ENCODE measurements at regions of chr13 and their contacts with region 1.

Region 1: GRCh38 chr13:23980160-23980551 is 82.9 kb upstream of the C1QTNF9B start:
- DNase-seq: peak; percentile 84 to 96 (median 90)
- ATAC-seq: peak; percentile 92
- H3K4me3 ChIP-seq: peak overlapping the region; percentile 56 to 79
- H3K4me3 Mint-ChIP-seq: peak overlapping the region; percentile 86
- H3K27ac ChIP-seq: peak overlapping the region in 1 of 2 experiments; percentile 51
- H3K27ac Mint-ChIP-seq: peak overlapping the region; percentile 34
- H3K4me1 ChIP-seq: peaks cover 10% of the 10 kb centered on the region
- H3K4me1 Mint-ChIP-seq: peaks cover 8% of the 10 kb centered on the region
- H3K27me3 ChIP-seq: peaks cover 8 to 10% of the 10 kb centered on the region in 2 experiments
- H3K27me3 Mint-ChIP-seq: peaks cover 17% of the 10 kb centered on the region
- CTCF ChIP-seq: no peak

Region 2: DNA sequence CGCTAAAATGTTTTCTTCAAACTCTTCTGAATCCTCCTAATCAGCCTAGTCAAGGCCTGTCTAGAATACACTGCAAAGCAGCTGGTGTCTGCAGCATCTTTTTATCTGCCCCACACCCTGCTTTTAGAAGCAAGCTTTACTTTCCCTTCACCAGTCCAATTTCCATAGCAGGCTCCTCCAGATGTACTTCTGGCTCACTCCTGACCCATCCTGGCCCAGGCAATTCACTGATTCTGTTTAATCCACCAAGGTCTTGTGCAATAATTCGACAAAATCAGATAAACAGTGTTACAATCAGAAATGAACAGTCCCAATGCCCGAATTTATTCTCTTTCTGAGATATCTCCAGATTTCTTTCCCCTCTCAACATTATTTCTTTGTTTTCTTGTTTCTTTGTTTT is 1214.6 kb before region 1 on chr13:
- CTCF ChIA-PET with region 1: no interaction called
- POLR2A ChIA-PET with region 1: no interaction called
- intact Hi-C with region 1: no loop called
- DNase-seq: no peak
- ATAC-seq: no peak
- H3K4me3 ChIP-seq: no peak overlapping the region
- H3K4me3 Mint-ChIP-seq: no peak overlapping the region
- H3K27ac ChIP-seq: no peak overlapping the region
- H3K27ac Mint-ChIP-seq: no peak overlapping the region
- H3K4me1 ChIP-seq: no peaks in the 10 kb centered on the region
- H3K4me1 Mint-ChIP-seq: no peaks in the 10 kb centered on the region
- H3K27me3 ChIP-seq: no peaks in the 10 kb centered on the region
- H3K27me3 Mint-ChIP-seq: no peaks in the 10 kb centered on the region
- CTCF ChIP-seq: no peak

Region 3: DNA sequence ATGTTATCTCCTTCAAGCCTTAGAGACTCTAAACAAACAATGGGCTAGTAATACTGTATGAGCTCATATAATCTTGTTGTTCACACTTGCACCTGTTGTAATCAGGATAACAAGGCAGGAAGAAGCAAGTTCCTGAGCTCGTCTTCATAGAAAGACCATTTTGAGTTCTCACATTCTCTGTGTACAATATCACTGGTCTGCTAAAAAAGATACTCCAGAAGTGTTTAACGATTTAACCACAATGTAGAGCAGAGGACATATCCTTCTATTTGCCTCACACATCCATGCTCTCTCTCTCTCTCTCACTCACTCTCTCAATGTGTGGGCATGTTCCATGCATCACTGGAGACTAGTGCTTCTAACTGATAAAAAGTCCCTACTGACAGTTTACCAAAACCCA is 213.9 kb before region 1 on chr13:
- CTCF ChIA-PET with region 1: no interaction called
- POLR2A ChIA-PET with region 1: no interaction called
- intact Hi-C with region 1: no loop called
- DNase-seq: no peak
- ATAC-seq: no peak
- H3K4me3 ChIP-seq: no peak overlapping the region
- H3K4me3 Mint-ChIP-seq: no peak overlapping the region
- H3K27ac ChIP-seq: no peak overlapping the region
- H3K27ac Mint-ChIP-seq: no peak overlapping the region
- H3K4me1 ChIP-seq: no peaks in the 10 kb centered on the region
- H3K4me1 Mint-ChIP-seq: no peaks in the 10 kb centered on the region
- H3K27me3 ChIP-seq: no peaks in the 10 kb centered on the region
- H3K27me3 Mint-ChIP-seq: no peaks in the 10 kb centered on the region
- CTCF ChIP-seq: no peak

Region 4: GRCh38 chr13:23966691-23967615 is 13.2 kb before region 1 on chr13:
- CTCF ChIA-PET with region 1: no interaction called
- POLR2A ChIA-PET with region 1: no interaction called
- intact Hi-C with region 1: loop called in 1 of 2 experiments (anchors 1 kb)
- DNase-seq: peak in 3 of 9 experiments; percentile 23 to 70 (median 56)
- ATAC-seq: peak; percentile 73
- H3K4me3 ChIP-seq: peak overlapping the region; percentile 40 to 57
- H3K4me3 Mint-ChIP-seq: peak overlapping the region; percentile 82
- H3K27ac ChIP-seq: peak overlapping the region; percentile 38 to 89
- H3K27ac Mint-ChIP-seq: peak overlapping the region; percentile 84
- H3K4me1 ChIP-seq: peaks cover 8% of the 10 kb centered on the region
- H3K4me1 Mint-ChIP-seq: peaks cover 15% of the 10 kb centered on the region
- H3K27me3 ChIP-seq: no peaks in the 10 kb centered on the region
- H3K27me3 Mint-ChIP-seq: no peaks in the 10 kb centered on the region
- CTCF ChIP-seq: no peak

Region 5: DNA sequence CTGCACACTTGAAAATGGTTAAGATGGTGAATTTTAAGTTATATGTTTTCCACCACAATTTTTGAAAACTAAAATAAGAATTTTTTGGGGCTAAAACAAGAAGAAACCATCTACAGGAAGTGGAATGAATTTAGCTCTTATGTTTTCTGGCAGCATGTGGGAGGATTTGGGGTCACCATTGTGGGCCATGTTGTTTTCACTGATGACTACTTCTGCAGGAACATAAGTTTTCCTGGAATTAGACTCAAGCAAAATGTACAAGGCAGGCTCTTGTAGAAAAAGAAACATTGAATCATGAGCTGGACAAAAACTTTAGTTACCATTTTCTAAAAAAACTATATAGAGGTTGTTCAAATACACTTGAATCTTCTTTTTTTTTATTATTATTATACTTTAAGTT is 42.4 kb after region 1 on chr13:
- CTCF ChIA-PET with region 1: no interaction called
- POLR2A ChIA-PET with region 1: no interaction called
- intact Hi-C with region 1: no loop called
- DNase-seq: no peak
- ATAC-seq: no peak
- H3K4me3 ChIP-seq: no peak overlapping the region
- H3K4me3 Mint-ChIP-seq: no peak overlapping the region
- H3K27ac ChIP-seq: no peak overlapping the region
- H3K27ac Mint-ChIP-seq: no peak overlapping the region
- H3K4me1 ChIP-seq: no peaks in the 10 kb centered on the region
- H3K4me1 Mint-ChIP-seq: no peaks in the 10 kb centered on the region
- H3K27me3 ChIP-seq: no peaks in the 10 kb centered on the region
- H3K27me3 Mint-ChIP-seq: no peaks in the 10 kb centered on the region
- CTCF ChIP-seq: no peak